Activated CD4-positive, alpha-beta T cell treated with anti-CD3 and anti-CD28 coated beads for 36 hours (primary cell): ENCODE measurements at regions of chr11 and their contacts with region 1.

Region 1: GRCh38 chr11:14202251-14203196 is 156.5 kb downstream of the RRAS2 start:
- DNase-seq: no peak
- ATAC-seq: no peak
- H3K4me3 Mint-ChIP-seq: no peak overlapping the region
- H3K27ac Mint-ChIP-seq: no peak overlapping the region
- H3K4me1 Mint-ChIP-seq: peaks cover 7% of the 10 kb centered on the region
- H3K27me3 Mint-ChIP-seq: no peaks in the 10 kb centered on the region

Region 2: DNA sequence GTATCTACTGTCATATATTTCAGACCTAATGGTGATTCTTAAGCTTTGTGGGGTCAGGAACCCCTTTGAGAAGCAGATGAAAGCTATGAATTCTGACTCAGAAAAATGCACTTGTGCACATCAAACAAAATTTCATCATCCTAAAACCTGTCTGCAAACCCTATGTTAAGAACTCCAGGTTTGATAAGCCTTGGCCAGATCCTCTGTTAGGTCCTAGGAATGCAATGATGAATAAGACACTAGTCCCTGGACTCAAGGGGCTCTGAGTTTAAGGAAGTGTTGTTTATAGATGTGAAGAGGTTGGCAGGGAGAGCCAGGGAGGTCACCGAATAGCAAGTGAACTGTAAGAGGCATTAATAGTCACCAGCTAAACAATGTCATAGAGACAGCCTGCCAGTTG is 136.8 kb before region 1 on chr11:
- CTCF ChIA-PET with region 1: no interaction called
- POLR2A ChIA-PET with region 1: interaction called, 10 read pairs
- intact Hi-C with region 1: no loop called
- DNase-seq: no peak
- ATAC-seq: peak; percentile 33
- H3K4me3 Mint-ChIP-seq: no peak overlapping the region
- H3K27ac Mint-ChIP-seq: peak overlapping the region; percentile 52
- H3K4me1 Mint-ChIP-seq: peaks cover 18% of the 10 kb centered on the region
- H3K27me3 Mint-ChIP-seq: peaks cover 2% of the 10 kb centered on the region

Region 3: DNA sequence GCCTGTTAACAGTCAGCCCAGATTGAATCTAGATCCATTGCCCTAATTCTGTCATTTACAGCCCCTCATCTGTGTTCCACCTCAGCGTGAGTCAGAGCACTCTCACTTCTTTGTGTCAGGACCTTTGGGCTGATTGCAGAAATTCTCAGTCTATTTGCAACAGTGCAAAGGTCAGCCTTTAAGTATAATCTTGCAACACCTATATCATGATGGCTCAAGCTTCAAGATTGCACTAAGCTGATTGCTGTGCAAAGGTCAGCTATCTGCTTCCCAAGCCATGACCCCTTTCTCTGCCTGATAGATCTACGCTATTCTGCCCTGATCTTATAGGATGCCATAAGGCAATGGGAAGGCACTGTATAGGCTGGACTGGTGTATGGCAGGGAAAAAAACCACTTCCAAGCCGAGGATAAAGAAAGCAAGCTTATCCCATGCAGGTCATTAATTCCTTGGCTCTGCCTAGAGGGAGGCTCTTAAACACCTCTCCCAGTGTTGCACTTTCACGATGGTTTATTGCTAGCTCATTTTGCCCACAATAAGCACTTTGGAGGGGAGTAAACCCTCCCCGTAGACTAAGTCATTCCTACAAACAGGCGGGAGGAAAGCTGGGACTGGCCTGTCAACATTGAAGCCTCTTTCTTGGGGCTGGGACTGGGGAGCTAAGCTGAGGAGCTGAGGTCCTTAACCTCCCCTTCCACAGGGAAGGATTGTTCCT is 55.9 kb after region 1 on chr11:
- CTCF ChIA-PET with region 1: no interaction called
- POLR2A ChIA-PET with region 1: no interaction called
- intact Hi-C with region 1: no loop called
- DNase-seq: no peak
- ATAC-seq: peak; percentile 42
- H3K4me3 Mint-ChIP-seq: no peak overlapping the region
- H3K27ac Mint-ChIP-seq: no peak overlapping the region
- H3K4me1 Mint-ChIP-seq: no peaks in the 10 kb centered on the region
- H3K27me3 Mint-ChIP-seq: no peaks in the 10 kb centered on the region